IMR-90 (cell line): ENCODE measurements at regions of chr6 and their contacts with region 1.

Region 1: GRCh38 chr6:53492860-53493634 is 51.9 kb downstream of the GCLC start:
- DNase-seq: peak; percentile 73
- ATAC-seq: peak; percentile 5
- H3K4me3 ChIP-seq: peak overlapping the region; percentile 0; the same call in 1 of the 2 replicates
- H3K27ac ChIP-seq: peak overlapping the region; percentile 55
- H3K4me1 ChIP-seq: peaks cover 18% of the 10 kb centered on the region
- H3K27me3 ChIP-seq: no peaks in the 10 kb centered on the region
- CTCF ChIP-seq: peak; percentile 89
- POLR2A ChIP-seq: no peak
- RAD21 ChIP-seq: peak; percentile 78

Region 2: GRCh38 chr6:53417140-53417539 is 75.9 kb before region 1 on chr6:
- CTCF ChIA-PET with region 1: no interaction called
- POLR2A ChIA-PET with region 1: no interaction called
- dilution Hi-C with region 1: no loop called
- in situ Hi-C with region 1: no loop called
- intact Hi-C with region 1: no loop called
- DNase-seq: no peak
- ATAC-seq: no peak
- H3K4me3 ChIP-seq: no peak overlapping the region
- H3K27ac ChIP-seq: no peak overlapping the region
- H3K4me1 ChIP-seq: no peaks in the 10 kb centered on the region
- H3K27me3 ChIP-seq: peaks cover 23% of the 10 kb centered on the region
- CTCF ChIP-seq: no peak
- POLR2A ChIP-seq: no peak
- RAD21 ChIP-seq: no peak

Region 3: GRCh38 chr6:53544470-53545308 is 51.6 kb after region 1 on chr6 and contains the start of gene GCLC:
- CTCF ChIA-PET with region 1: interaction called, 6 read pairs
- POLR2A ChIA-PET with region 1: no interaction called
- dilution Hi-C with region 1: no loop called
- in situ Hi-C with region 1: loop called (anchors 5 kb)
- intact Hi-C with region 1: loop called (anchors 1 kb)
- DNase-seq: peak; percentile 95
- ATAC-seq: peak; percentile 70
- H3K4me3 ChIP-seq: peak within 1 kb of the TSS; percentile 97
- H3K27ac ChIP-seq: peak within 1 kb of the TSS; percentile 92
- H3K4me1 ChIP-seq: peaks cover 16% of the 10 kb centered on the region
- H3K27me3 ChIP-seq: no peaks in the 10 kb centered on the region
- CTCF ChIP-seq: peak; percentile 70
- POLR2A ChIP-seq: peak; percentile 94
- RAD21 ChIP-seq: peak; percentile 60
- total RNA-seq, gene GCLC: 20.8 and 24.2 TPM in 2 replicates

Region 4: DNA sequence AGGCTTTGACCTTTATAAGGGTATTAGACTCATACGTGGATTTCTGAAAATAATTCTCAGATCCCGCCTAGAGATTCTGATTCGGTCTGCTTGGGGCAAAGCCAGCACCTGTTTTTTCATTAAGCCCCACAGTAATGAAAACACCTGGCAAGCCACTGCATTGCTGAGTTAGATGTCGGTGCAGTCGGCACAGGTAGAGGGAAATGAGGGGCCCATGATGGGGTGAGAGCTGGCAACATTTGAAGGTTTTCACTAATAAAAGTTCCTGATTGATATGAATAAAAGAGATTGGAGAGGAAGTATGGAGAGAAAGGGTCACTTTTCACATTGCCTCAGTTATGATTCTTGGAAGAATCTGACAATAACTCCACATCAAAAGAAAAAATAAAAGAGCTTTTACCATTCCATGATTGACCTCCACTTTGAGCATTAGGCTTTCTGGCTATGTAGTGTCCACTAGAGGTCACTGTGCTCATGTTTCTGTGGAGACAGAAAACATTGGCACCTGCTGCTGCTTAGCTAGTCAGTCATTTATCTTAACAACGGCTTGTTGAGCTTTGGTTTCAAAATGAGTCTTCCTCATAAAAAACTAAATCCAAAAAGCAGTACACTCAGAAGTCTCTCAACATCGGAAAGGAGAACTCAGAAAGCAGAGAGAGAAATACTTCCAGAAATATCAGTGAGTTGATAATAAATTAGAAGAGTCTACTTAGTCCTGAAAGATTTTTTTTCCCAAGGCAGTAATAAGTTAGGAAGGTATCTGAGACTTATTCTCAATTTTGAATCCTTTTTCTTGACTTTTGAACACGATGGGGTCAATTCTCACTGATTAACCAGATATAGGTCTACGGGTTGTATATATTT is 225.8 kb after region 1 on chr6:
- CTCF ChIA-PET with region 1: interaction called, 15 read pairs
- POLR2A ChIA-PET with region 1: interaction called, 8 read pairs
- dilution Hi-C with region 1: no loop called
- in situ Hi-C with region 1: loop called (anchors 5 kb)
- intact Hi-C with region 1: no loop called
- DNase-seq: peak; percentile 75
- ATAC-seq: peak; percentile 44; the same call in 1 of the 2 replicates
- H3K4me3 ChIP-seq: no peak overlapping the region
- H3K27ac ChIP-seq: no peak overlapping the region
- H3K4me1 ChIP-seq: peaks cover 6% of the 10 kb centered on the region
- H3K27me3 ChIP-seq: no peaks in the 10 kb centered on the region; the same call in 1 of the 2 replicates
- CTCF ChIP-seq: peak; percentile 74
- POLR2A ChIP-seq: no peak
- RAD21 ChIP-seq: peak; percentile 51

Region 5: DNA sequence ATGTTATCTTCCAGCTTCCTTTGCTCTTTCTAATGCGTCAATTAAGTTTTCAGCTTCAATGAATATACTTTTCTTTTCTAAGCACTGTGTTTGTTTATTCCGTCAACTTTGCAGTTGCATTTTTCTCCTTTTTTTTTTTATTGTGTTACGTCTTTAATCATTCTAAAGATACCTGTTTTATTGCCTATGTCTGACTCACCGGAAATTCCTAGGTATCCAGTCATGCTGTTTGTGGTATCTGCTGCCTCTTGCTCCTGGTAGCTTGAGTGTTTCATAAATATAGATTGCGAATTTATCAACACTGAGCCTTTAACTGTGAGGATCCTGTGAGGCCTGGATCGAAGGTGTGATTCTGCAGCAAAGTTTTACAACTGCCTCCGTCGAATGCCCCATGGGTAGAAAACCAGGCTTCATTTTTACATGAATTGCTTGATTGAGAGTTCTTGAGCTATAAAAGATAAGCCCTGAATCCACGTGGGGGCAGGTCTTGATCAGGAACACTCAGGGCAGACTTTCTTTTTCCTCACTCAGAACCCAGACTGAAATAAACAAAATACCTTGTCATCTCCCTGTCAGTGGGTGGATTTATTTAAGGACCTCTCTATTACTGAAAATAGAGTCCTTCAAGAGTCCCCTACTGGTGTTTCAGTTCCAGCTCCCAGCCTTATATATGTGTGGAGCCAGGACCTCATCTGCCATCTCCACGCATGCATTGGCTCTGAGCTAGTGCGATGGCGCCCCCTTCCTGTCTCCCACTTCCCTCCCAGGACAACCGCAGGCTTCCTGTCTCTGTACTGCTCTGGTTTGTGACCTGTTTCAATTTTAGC is 241.6 kb after region 1 on chr6:
- CTCF ChIA-PET with region 1: interaction called, 24 read pairs
- POLR2A ChIA-PET with region 1: no interaction called
- dilution Hi-C with region 1: no loop called
- in situ Hi-C with region 1: no loop called
- intact Hi-C with region 1: no loop called
- DNase-seq: peak; percentile 78
- ATAC-seq: peak; percentile 74
- H3K4me3 ChIP-seq: no peak overlapping the region
- H3K27ac ChIP-seq: no peak overlapping the region
- H3K4me1 ChIP-seq: peaks cover 7% of the 10 kb centered on the region
- H3K27me3 ChIP-seq: no peaks in the 10 kb centered on the region
- CTCF ChIP-seq: peak; percentile 37
- POLR2A ChIP-seq: no peak
- RAD21 ChIP-seq: no peak

Region 6: GRCh38 chr6:53956068-53956711 is 463.1 kb after region 1 on chr6:
- CTCF ChIA-PET with region 1: interaction called, 11 read pairs
- POLR2A ChIA-PET with region 1: no interaction called
- dilution Hi-C with region 1: no loop called
- in situ Hi-C with region 1: loop called (anchors 5 kb)
- intact Hi-C with region 1: loop called (anchors 1 kb)
- DNase-seq: peak; percentile 70
- ATAC-seq: peak; percentile 97
- H3K4me3 ChIP-seq: no peak overlapping the region
- H3K27ac ChIP-seq: no peak overlapping the region
- H3K4me1 ChIP-seq: peaks cover 3% of the 10 kb centered on the region
- H3K27me3 ChIP-seq: no peaks in the 10 kb centered on the region
- CTCF ChIP-seq: peak; percentile 83
- POLR2A ChIP-seq: no peak
- RAD21 ChIP-seq: peak; percentile 89